ENCODE measurements at regions of chr1 and their contacts with region 1.

Region 1: DNA sequence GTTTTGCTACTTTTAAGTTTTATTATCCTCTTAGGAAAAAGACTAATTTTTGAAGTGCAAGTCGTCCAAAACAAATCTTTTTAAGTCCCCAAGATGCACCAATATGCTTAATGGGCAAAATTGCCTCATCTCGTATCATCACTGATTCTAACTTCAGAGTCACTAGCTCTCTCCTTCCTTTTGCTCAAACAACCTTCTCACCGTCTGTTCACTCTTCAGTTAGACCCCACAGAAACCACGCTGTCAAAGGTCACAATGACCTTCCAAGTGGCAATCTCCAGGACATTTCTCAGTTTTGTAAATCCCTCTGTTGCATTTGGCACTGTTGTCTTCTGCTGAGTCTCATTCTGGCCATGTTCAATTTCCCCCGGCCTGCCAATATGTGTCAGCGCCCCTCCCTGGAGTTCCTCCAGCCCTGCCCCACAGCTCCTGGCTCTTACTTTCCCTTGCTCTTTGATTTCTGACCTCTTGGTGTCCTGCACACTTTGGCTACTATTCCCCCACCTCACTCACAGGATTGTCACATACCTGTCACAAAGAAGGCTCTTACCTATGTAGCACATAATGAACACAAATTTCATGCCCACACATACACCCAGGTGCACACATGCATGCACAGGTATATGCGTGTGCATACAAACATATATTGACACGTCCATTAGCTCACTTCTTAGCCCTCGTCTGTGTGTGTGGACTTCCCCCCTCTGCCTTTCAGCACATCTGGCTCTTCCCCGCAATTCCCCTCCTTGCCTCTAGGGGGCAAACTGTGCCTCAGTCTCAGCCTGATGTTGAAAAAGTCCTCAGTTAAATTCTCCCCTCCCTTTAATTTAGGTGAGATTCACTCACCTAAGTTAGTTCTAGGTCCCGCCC is 354.0 kb upstream of the DUSP10 start:
- DNase-seq: peak; percentile 54
- H3K4me3 ChIP-seq: no peak overlapping the region
- H3K27ac ChIP-seq: no peak overlapping the region
- H3K4me1 ChIP-seq: no peaks in the 10 kb centered on the region
- H3K27me3 ChIP-seq: no peaks in the 10 kb centered on the region
- CTCF ChIP-seq: peak; percentile 87

Region 2: GRCh38 chr1:222048094-222048595 is 47.7 kb before region 1 on chr1:
- intact Hi-C with region 1: no loop called
- DNase-seq: no peak
- H3K4me3 ChIP-seq: no peak overlapping the region
- H3K27ac ChIP-seq: no peak overlapping the region
- H3K4me1 ChIP-seq: no peaks in the 10 kb centered on the region
- H3K27me3 ChIP-seq: no peaks in the 10 kb centered on the region
- CTCF ChIP-seq: no peak

Region 3: GRCh38 chr1:222167111-222167510 is 71.3 kb after region 1 on chr1:
- intact Hi-C with region 1: loop called (anchors 5 kb)
- DNase-seq: peak; percentile 37
- H3K4me3 ChIP-seq: no peak overlapping the region
- H3K27ac ChIP-seq: no peak overlapping the region
- H3K4me1 ChIP-seq: no peaks in the 10 kb centered on the region
- H3K27me3 ChIP-seq: no peaks in the 10 kb centered on the region
- CTCF ChIP-seq: peak; percentile 62